Activated naive CD8-positive, alpha-beta T cell treated with anti-CD3 and anti-CD28 coated beads, Interleukin-2, amount 10 ng/mL, durations not matched to agents 7 days and 5 days (primary cell): ENCODE measurements at regions of chr10 and their contacts with region 1.

Region 1: DNA sequence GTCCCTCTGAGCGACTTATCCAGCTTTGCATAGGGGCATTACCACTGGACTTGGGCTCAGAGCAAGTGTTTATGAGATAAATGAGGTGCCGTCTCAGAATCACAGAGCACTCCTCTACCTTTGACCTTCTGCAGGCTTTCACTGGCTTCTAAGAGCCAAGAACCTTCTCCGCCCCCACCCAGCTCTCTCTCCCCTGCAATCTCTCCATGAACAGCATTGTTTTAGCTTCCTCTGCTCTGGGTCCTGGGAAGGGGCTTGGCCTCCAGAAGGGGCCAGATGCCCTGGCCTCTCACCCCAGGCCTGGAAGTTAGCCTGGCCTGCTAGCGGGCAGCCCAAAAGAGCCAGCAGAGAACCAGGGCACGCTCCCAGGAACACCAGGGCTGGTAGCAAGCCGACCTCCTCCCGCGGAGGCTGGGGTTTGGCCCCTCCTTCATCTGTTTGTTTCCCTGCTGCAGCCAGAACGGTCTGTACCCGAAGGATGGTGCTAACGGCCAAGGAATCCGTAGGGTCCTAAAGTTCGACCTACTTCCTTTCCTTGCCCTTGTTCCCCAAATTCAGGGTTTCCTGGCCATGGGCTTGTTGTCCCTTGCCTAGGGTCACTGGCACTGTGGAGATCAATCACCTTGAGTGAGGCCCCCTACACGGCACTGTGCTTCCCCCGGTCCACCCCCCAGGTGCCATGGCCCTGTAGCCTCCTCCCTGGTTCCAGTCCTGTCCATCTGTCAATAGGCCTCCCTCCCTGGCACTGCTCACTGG is 18.7 kb upstream of the DDIT4 start:
- DNase-seq: peak; percentile 70
- ATAC-seq: peak; percentile 85
- H3K4me3 Mint-ChIP-seq: peak overlapping the region; percentile 87
- H3K27ac Mint-ChIP-seq: peak overlapping the region; percentile 95
- H3K4me1 Mint-ChIP-seq: peaks cover 69% of the 10 kb centered on the region
- H3K27me3 Mint-ChIP-seq: no peaks in the 10 kb centered on the region

Region 2: GRCh38 chr10:72331601-72332422 is 76.8 kb after region 1 on chr10:
- POLR2A ChIA-PET with region 1: interaction called, 48 read pairs
- DNase-seq: peak; percentile 89
- ATAC-seq: peak; percentile 61
- H3K4me3 Mint-ChIP-seq: peak overlapping the region; percentile 91
- H3K27ac Mint-ChIP-seq: peak overlapping the region; percentile 100
- H3K4me1 Mint-ChIP-seq: peaks cover 73% of the 10 kb centered on the region
- H3K27me3 Mint-ChIP-seq: no peaks in the 10 kb centered on the region